CD4-positive, alpha-beta T cell (primary cell): ENCODE measurements at regions of chr3 and their contacts with region 1.

Region 1: GRCh38 chr3:14921078-14921616 is 26.2 kb upstream of the NR2C2 start:
- DNase-seq: peak; percentile 67 to 89 (median 80)
- ATAC-seq: peak; percentile 98
- H3K4me3 ChIP-seq: no peak overlapping the region
- H3K4me3 Mint-ChIP-seq: no peak overlapping the region
- H3K27ac ChIP-seq: no peak overlapping the region
- H3K27ac Mint-ChIP-seq: no peak overlapping the region
- H3K4me1 ChIP-seq: peaks cover 7% of the 10 kb centered on the region
- H3K4me1 Mint-ChIP-seq: no peaks in the 10 kb centered on the region
- H3K27me3 ChIP-seq: no peaks in the 10 kb centered on the region
- H3K27me3 Mint-ChIP-seq: no peaks in the 10 kb centered on the region
- CTCF ChIP-seq: peak; percentile 96

Region 2: DNA sequence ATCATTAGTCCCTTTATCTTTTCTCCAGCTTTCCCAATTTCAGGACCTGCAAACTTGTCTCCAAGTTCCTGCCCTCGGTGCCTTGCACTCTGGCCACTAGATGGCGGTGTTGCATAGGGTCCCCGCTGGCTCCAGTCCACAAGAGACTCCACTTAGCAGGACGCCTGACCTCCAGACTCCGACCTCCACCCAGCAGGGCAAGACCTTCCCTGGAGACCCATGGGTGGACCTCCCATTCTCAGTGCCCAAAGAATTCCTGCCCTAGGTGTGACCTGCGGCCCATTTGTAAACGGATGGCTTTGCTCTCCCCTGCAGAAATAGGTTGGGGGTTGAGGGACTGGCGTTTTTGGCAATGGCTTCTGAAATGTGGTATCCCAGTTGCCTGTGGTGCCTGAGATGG is 659.9 kb before region 1 on chr3:
- CTCF ChIA-PET with region 1: no interaction called
- POLR2A ChIA-PET with region 1: no interaction called
- intact Hi-C with region 1: loop called (anchors 1 to 5 kb)
- DNase-seq: peak; percentile 55 to 86 (median 72)
- ATAC-seq: peak; percentile 61
- H3K4me3 ChIP-seq: no peak overlapping the region
- H3K4me3 Mint-ChIP-seq: no peak overlapping the region
- H3K27ac ChIP-seq: no peak overlapping the region
- H3K27ac Mint-ChIP-seq: no peak overlapping the region
- H3K4me1 ChIP-seq: peaks cover 3% of the 10 kb centered on the region
- H3K4me1 Mint-ChIP-seq: no peaks in the 10 kb centered on the region
- H3K27me3 ChIP-seq: no peaks in the 10 kb centered on the region
- H3K27me3 Mint-ChIP-seq: no peaks in the 10 kb centered on the region
- CTCF ChIP-seq: peak; percentile 100

Region 3: DNA sequence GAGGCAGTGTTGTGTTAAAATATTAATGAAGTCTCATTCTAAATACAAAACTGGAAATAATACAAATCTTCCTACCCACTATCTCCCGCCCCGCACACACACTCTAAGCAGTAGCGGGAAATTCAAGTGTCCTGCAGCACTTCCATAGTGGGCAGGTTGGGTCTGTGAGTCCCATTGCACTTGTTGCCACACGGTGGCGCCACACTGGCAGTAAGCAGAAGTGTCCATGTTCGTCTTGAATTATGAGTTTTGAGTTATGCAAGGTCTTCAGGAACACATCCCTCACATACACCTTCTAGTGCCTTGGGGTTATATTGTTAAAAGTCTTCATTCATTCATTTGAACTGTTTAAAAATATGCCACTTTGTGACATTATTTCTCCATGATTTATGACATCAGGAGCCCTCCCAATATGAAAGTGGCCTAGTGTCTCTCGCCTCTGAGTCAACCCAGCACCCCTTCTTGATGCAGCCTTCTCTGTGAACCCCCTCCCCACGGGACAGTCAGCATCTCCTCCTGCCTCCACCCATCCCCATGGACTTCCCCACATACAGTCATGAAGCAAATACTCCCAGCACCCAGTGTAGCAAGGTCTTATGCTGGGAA is 287.2 kb before region 1 on chr3:
- CTCF ChIA-PET with region 1: interaction called, 3 read pairs
- POLR2A ChIA-PET with region 1: no interaction called
- intact Hi-C with region 1: loop called (anchors 1 kb)
- DNase-seq: peak; percentile 29 to 83 (median 48)
- ATAC-seq: peak; percentile 64
- H3K4me3 ChIP-seq: no peak overlapping the region
- H3K4me3 Mint-ChIP-seq: no peak overlapping the region
- H3K27ac ChIP-seq: no peak overlapping the region
- H3K27ac Mint-ChIP-seq: no peak overlapping the region
- H3K4me1 ChIP-seq: no peaks in the 10 kb centered on the region
- H3K4me1 Mint-ChIP-seq: no peaks in the 10 kb centered on the region
- H3K27me3 ChIP-seq: peaks cover 11 to 16% of the 10 kb centered on the region in 2 experiments
- H3K27me3 Mint-ChIP-seq: peaks cover 54% of the 10 kb centered on the region
- CTCF ChIP-seq: peak; percentile 76

Region 4: DNA sequence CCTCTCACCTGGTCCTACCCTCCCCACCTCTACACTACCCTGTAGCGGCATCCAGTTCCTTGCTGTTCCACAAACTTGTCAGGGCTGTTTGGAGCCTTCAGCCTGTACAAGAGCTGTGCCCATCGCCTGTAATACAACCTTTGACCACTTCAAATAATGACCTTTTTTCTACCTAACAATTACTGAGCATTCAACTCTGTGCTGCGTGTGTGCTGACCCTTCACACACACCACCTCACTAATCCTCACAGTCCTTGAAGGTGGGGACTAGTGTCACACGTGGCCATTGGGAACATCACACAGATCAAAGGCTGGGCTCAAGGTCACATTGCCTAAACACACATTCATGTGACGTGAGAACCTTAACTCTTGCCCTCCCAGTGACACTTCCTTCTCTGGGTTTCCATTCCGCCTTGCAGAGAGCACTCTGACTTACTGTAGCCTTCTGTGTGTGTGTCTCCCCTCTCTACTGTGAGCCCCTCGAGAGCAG is 243.1 kb before region 1 on chr3:
- CTCF ChIA-PET with region 1: no interaction called
- POLR2A ChIA-PET with region 1: interaction called, 3 read pairs
- intact Hi-C with region 1: loop called in 1 of 2 experiments (anchors 1 kb)
- DNase-seq: no peak
- ATAC-seq: no peak
- H3K4me3 ChIP-seq: no peak overlapping the region
- H3K4me3 Mint-ChIP-seq: no peak overlapping the region
- H3K27ac ChIP-seq: no peak overlapping the region
- H3K27ac Mint-ChIP-seq: no peak overlapping the region
- H3K4me1 ChIP-seq: no peaks in the 10 kb centered on the region
- H3K4me1 Mint-ChIP-seq: no peaks in the 10 kb centered on the region
- H3K27me3 ChIP-seq: no peaks in the 10 kb centered on the region
- H3K27me3 Mint-ChIP-seq: no peaks in the 10 kb centered on the region
- CTCF ChIP-seq: no peak

Region 5: DNA sequence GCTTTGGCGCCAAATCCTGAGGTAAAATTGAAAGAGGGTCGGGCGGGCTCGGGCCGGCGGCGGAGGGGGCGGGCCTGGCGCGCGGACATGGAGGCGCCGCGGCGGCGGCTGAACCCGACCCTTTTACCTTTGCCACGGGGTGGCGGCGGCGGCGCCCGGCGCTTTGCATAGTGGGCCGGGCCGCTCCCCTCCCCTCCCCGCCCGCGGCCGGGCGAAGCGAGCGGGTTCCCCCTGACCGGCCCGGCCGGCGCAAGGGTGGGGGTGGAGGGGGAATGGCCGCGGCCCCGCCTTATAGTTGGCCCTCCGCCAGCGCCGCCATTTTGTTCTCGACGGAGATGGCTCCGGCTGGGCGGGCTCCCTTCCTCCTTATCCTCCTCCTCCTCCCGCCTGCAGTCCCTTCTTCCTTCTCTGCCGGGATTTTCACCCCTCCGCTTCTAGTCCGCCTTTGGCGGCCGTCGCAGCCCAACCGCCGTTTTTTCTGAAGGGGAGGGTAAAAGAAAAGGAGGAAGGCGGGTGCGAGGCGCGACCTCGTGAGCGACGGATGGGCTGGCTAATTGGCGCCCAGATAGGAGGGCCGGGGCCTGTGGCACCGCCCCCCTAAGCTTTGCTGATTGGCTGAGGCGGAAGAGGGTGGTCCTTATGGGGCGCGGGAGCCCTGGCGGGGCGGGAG is 26.9 kb after region 1 on chr3:
- CTCF ChIA-PET with region 1: interaction called, 3 read pairs
- POLR2A ChIA-PET with region 1: interaction called, 10 read pairs
- intact Hi-C with region 1: no loop called
- DNase-seq: peak; percentile 93 to 97 (median 95)
- ATAC-seq: peak; percentile 90
- H3K4me3 ChIP-seq: peak overlapping the region; percentile 96
- H3K4me3 Mint-ChIP-seq: peak overlapping the region; percentile 98
- H3K27ac ChIP-seq: peak overlapping the region; percentile 98 to 99
- H3K27ac Mint-ChIP-seq: peak overlapping the region; percentile 98
- H3K4me1 ChIP-seq: peaks cover 30% of the 10 kb centered on the region
- H3K4me1 Mint-ChIP-seq: peaks cover 66% of the 10 kb centered on the region
- H3K27me3 ChIP-seq: no peaks in the 10 kb centered on the region
- H3K27me3 Mint-ChIP-seq: no peaks in the 10 kb centered on the region
- CTCF ChIP-seq: no peak

Region 6: DNA sequence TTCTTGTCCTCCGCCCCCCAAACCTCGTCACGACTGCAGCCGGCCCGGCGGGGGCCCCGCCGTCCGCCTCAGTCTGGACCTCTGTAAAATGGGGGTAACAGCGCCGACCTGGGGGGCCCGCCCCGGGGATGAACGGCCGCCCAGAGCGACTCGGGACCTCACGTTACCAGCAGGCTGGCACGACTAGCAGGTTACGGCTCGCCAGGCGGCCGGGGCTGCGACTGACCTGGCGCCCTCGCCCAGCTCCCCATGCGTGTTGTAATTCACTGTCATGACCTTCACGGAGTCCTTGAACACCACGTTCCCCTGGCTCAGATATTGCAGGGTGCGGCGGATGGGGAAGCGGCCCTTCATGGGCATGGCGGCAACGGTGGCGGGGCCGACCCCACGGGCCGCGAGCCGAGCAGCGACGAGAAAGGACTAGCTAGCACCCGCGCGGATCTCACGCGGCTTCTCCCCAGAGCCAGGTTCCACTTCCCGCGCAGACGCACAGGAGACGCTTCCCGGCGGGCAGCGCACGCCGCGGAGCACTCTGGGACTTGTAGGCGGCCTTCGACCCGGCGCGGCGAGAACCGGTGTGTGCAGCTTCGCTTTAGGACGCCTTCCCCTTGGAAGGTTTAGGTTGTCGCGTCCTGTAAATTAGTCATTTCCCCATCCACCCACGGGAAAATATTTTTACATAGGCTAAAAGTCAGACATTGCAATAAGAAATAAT is 143.8 kb after region 1 on chr3 and contains the start of gene MRPS25:
- CTCF ChIA-PET with region 1: no interaction called
- POLR2A ChIA-PET with region 1: no interaction called
- intact Hi-C with region 1: no loop called
- DNase-seq: peak; percentile 79 to 95 (median 85)
- ATAC-seq: peak; percentile 98
- H3K4me3 ChIP-seq: peak within 1 kb of the TSS; percentile 88
- H3K4me3 Mint-ChIP-seq: peak within 1 kb of the TSS; percentile 98
- H3K27ac ChIP-seq: peak within 1 kb of the TSS; percentile 61 to 77
- H3K27ac Mint-ChIP-seq: peak within 1 kb of the TSS; percentile 92
- H3K4me1 ChIP-seq: peaks cover 32% of the 10 kb centered on the region
- H3K4me1 Mint-ChIP-seq: peaks cover 25% of the 10 kb centered on the region
- H3K27me3 ChIP-seq: no peaks in the 10 kb centered on the region
- H3K27me3 Mint-ChIP-seq: no peaks in the 10 kb centered on the region
- CTCF ChIP-seq: no peak
- total RNA-seq, gene MRPS25: 59.9 to 60.2 TPM